ENCODE measurements at regions of chr7 and their contacts with region 1.

Region 1: DNA sequence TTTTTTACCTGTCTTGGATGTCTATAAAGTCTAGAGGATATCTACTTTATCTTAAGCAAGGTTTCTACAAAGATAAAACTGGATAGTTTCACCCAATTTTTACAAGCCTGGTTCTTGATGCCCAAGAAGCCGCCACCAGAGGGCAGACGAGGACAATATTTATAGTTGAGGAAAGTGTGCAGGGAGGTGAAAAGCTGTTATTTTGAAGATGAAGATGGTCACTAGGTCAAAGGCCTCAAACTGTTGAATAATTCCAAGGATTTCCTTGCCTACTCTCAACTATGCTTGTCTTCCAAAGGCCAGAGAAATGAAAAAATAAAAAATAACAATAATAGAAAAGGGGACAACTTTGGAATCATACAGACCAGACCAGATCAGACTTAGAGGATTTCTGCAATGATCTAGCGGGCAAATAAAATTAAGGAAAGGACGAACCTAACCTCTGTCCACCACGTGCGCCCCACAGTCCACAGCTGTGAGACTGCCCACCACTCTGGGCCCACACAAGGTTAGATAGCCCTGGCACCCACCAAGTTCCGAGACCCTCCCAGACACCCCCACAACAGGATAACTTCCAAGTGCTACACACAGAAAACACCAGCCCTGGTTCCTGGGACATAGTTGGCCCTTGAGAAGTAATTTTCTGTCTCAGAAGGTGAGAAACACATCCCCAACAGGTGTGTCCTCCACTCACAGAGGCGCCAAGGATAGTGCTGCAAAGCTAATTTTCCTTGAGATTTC is 2.8 kb downstream of the PKD1L1 start:
- DNase-seq: peak; percentile 34 to 69 (median 56)
- ATAC-seq: peak; percentile 54
- H3K4me3 ChIP-seq: no peak overlapping the region
- H3K4me3 Mint-ChIP-seq: no peak overlapping the region
- H3K27ac ChIP-seq: no peak overlapping the region
- H3K27ac Mint-ChIP-seq: no peak overlapping the region
- H3K4me1 ChIP-seq: no peaks in the 10 kb centered on the region
- H3K4me1 Mint-ChIP-seq: no peaks in the 10 kb centered on the region
- H3K27me3 ChIP-seq: no peaks in the 10 kb centered on the region
- H3K27me3 Mint-ChIP-seq: no peaks in the 10 kb centered on the region

Region 2: GRCh38 chr7:47771336-47771989 is 174.0 kb before region 1 on chr7:
- CTCF ChIA-PET with region 1: no interaction called
- POLR2A ChIA-PET with region 1: no interaction called
- intact Hi-C with region 1: no loop called
- DNase-seq: no peak
- ATAC-seq: no peak
- H3K4me3 ChIP-seq: no peak overlapping the region
- H3K4me3 Mint-ChIP-seq: no peak overlapping the region
- H3K27ac ChIP-seq: no peak overlapping the region
- H3K27ac Mint-ChIP-seq: no peak overlapping the region
- H3K4me1 ChIP-seq: no peaks in the 10 kb centered on the region
- H3K4me1 Mint-ChIP-seq: no peaks in the 10 kb centered on the region
- H3K27me3 ChIP-seq: no peaks in the 10 kb centered on the region
- H3K27me3 Mint-ChIP-seq: peaks cover 0 to 13% (median 0%) of the 10 kb centered on the region in 5 donors

Region 3: GRCh38 chr7:47968847-47969774 is 23.7 kb after region 1 on chr7:
- CTCF ChIA-PET with region 1: interaction called, 4 read pairs
- POLR2A ChIA-PET with region 1: no interaction called
- intact Hi-C with region 1: loop called in 1 of 2 experiments (anchors 1 kb)
- DNase-seq: peak in 7 of 9 donors; percentile 34 to 49 (median 38)
- ATAC-seq: peak; percentile 67
- H3K4me3 ChIP-seq: no peak overlapping the region
- H3K4me3 Mint-ChIP-seq: no peak overlapping the region
- H3K27ac ChIP-seq: no peak overlapping the region
- H3K27ac Mint-ChIP-seq: peak overlapping the region in 6 of 9 donors; percentile 25 to 64 (median 50)
- H3K4me1 ChIP-seq: no peaks in the 10 kb centered on the region
- H3K4me1 Mint-ChIP-seq: peaks cover 24 to 65% (median 37%) of the 10 kb centered on the region in 7 donors
- H3K27me3 ChIP-seq: no peaks in the 10 kb centered on the region
- H3K27me3 Mint-ChIP-seq: no peaks in the 10 kb centered on the region

Region 4: DNA sequence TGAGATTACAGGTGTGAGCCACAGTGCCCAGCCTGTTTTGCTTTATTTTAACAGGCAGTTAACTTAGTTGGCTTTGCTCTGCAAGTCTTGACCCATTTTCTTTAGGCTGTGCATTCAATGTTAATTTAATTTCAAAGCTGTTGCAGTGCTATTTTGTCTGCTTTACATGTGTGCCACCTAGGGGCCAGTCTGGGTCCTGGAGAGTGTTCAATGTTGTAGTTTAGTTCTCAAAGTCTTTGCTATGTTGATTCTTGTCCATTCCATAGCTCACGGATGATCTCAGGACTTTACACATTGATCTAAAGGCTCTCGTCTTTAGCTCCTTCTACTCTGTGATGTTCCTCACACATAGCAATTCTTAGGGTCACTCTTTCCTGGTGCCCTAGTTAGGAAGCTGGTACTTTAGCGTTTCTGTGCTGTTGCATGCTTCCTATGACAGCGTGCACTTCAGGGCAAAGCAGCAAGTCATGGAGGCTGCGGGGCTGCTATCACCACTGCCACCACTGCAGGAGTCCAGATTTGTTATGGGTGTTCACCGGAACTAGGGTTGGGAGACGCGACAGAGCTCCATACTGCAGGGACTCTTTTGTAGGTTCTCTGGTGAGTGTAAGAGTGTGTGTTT is 209.5 kb after region 1 on chr7:
- CTCF ChIA-PET with region 1: interaction called, 14 read pairs
- POLR2A ChIA-PET with region 1: no interaction called
- intact Hi-C with region 1: loop called in 1 of 2 experiments (anchors 1 kb)
- DNase-seq: peak in 7 of 9 donors; percentile 4 to 29 (median 13)
- ATAC-seq: peak; percentile 60
- H3K4me3 ChIP-seq: no peak overlapping the region
- H3K4me3 Mint-ChIP-seq: no peak overlapping the region
- H3K27ac ChIP-seq: no peak overlapping the region
- H3K27ac Mint-ChIP-seq: no peak overlapping the region
- H3K4me1 ChIP-seq: no peaks in the 10 kb centered on the region
- H3K4me1 Mint-ChIP-seq: no peaks in the 10 kb centered on the region
- H3K27me3 ChIP-seq: no peaks in the 10 kb centered on the region
- H3K27me3 Mint-ChIP-seq: peaks cover 10 to 32% (median 30%) of the 10 kb centered on the region in 5 donors

Region 5: GRCh38 chr7:48718731-48719387 is 773.4 kb after region 1 on chr7:
- CTCF ChIA-PET with region 1: no interaction called
- POLR2A ChIA-PET with region 1: no interaction called
- intact Hi-C with region 1: loop called in 1 of 2 experiments (anchors 10 kb)
- DNase-seq: no peak
- ATAC-seq: no peak
- H3K4me3 ChIP-seq: no peak overlapping the region
- H3K4me3 Mint-ChIP-seq: no peak overlapping the region
- H3K27ac ChIP-seq: no peak overlapping the region
- H3K27ac Mint-ChIP-seq: no peak overlapping the region
- H3K4me1 ChIP-seq: no peaks in the 10 kb centered on the region
- H3K4me1 Mint-ChIP-seq: no peaks in the 10 kb centered on the region
- H3K27me3 ChIP-seq: no peaks in the 10 kb centered on the region
- H3K27me3 Mint-ChIP-seq: no peaks in the 10 kb centered on the region

Region 6: DNA sequence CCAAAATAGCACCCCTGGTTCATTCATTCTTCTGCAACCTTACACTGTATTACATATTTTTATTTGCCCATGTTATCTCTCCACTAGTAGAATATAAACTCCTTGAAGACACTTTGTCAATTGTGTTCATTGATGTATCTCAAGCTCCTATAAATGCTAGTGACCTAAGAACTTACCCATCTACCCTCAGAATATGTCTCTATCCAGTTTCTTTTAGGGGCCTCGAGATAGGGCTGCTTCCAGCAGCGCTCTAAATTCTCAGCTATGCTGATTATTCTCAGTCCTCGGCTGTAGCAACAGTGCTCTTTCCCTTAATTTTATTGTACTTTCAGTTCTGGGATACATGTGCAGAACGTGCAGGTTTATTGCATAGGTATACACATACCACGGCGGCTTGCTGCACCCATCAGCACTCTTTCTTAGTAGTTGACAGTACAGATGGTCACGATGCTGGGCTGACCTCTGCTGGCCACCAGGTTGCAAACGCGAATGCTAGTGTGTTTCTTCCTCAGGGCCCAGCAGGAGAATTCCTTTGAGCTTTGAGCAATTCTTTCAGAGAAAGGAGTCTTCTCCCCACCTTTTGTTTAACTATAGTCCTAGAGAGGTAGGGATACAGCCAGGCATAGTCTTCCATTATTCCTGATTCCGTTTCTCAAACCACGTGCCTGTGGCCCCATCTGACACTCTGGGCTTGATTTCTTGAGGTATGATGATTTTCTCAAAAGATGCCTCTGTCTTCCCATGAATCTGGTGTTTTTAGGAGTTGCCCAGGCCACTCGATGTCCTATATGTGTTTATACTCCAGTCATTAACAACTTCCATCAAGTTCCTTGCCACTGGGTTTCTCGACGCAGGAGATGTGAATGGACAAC is 929.9 kb after region 1 on chr7:
- CTCF ChIA-PET with region 1: no interaction called
- POLR2A ChIA-PET with region 1: no interaction called
- intact Hi-C with region 1: loop called in 1 of 2 experiments (anchors 10 kb)
- DNase-seq: no peak
- ATAC-seq: no peak
- H3K4me3 ChIP-seq: no peak overlapping the region
- H3K4me3 Mint-ChIP-seq: no peak overlapping the region
- H3K27ac ChIP-seq: no peak overlapping the region
- H3K27ac Mint-ChIP-seq: no peak overlapping the region
- H3K4me1 ChIP-seq: no peaks in the 10 kb centered on the region
- H3K4me1 Mint-ChIP-seq: no peaks in the 10 kb centered on the region
- H3K27me3 ChIP-seq: no peaks in the 10 kb centered on the region
- H3K27me3 Mint-ChIP-seq: no peaks in the 10 kb centered on the region

Measured in naive thymus-derived CD4-positive, alpha-beta T cell (primary cell).